ENCODE measurements at regions of chr10 and their contacts with region 1.

Region 1: GRCh38 chr10:61284222-61284890 is 168.8 kb downstream of the TMEM26 start:
- DNase-seq: no peak
- ATAC-seq: peak; percentile 81 to 86
- H3K4me3 ChIP-seq: no peak overlapping the region
- H3K27ac ChIP-seq: peak overlapping the region in 3 of 4 donors; percentile 9 to 25 (median 18)
- H3K4me1 ChIP-seq: peaks cover 7 to 11% of the 10 kb centered on the region in 2 donors
- H3K27me3 ChIP-seq: no peaks in the 10 kb centered on the region
- CTCF ChIP-seq: peak; percentile 65 to 86 (median 76)
- POLR2A ChIP-seq: no peak

Region 2: GRCh38 chr10:60367431-60367830 is 916.9 kb before region 1 on chr10:
- in situ Hi-C with region 1: no loop called
- intact Hi-C with region 1: no loop called
- DNase-seq: no peak
- ATAC-seq: no peak
- H3K4me3 ChIP-seq: no peak overlapping the region
- H3K27ac ChIP-seq: no peak overlapping the region
- H3K4me1 ChIP-seq: peaks cover 0 to 6% of the 10 kb centered on the region in 2 donors
- H3K27me3 ChIP-seq: no peaks in the 10 kb centered on the region
- CTCF ChIP-seq: no peak
- POLR2A ChIP-seq: no peak

Region 3: GRCh38 chr10:60810809-60811182 is 473.6 kb before region 1 on chr10:
- in situ Hi-C with region 1: loop called (anchors 5 to 10 kb)
- intact Hi-C with region 1: no loop called
- DNase-seq: peak; percentile 23 to 29
- ATAC-seq: peak; percentile 98
- H3K4me3 ChIP-seq: no peak overlapping the region
- H3K27ac ChIP-seq: peak overlapping the region; percentile 59 to 86 (median 79)
- H3K4me1 ChIP-seq: peaks cover 13 to 16% of the 10 kb centered on the region in 2 donors
- H3K27me3 ChIP-seq: no peaks in the 10 kb centered on the region
- CTCF ChIP-seq: no peak
- POLR2A ChIP-seq: no peak

Region 4: GRCh38 chr10:60964257-60965235 is 319.8 kb before region 1 on chr10:
- in situ Hi-C with region 1: loop called in 2 of 4 experiments (anchors 10 to 25 kb)
- intact Hi-C with region 1: loop called (anchors 5 kb)
- DNase-seq: peak; percentile 57 to 65
- ATAC-seq: peak; percentile 92
- H3K4me3 ChIP-seq: no peak overlapping the region
- H3K27ac ChIP-seq: peak overlapping the region in 3 of 4 donors; percentile 49 to 60 (median 53)
- H3K4me1 ChIP-seq: peaks cover 6 to 14% of the 10 kb centered on the region in 2 donors
- H3K27me3 ChIP-seq: no peaks in the 10 kb centered on the region
- CTCF ChIP-seq: peak; percentile 78 to 86 (median 80)
- POLR2A ChIP-seq: no peak

Region 5: DNA sequence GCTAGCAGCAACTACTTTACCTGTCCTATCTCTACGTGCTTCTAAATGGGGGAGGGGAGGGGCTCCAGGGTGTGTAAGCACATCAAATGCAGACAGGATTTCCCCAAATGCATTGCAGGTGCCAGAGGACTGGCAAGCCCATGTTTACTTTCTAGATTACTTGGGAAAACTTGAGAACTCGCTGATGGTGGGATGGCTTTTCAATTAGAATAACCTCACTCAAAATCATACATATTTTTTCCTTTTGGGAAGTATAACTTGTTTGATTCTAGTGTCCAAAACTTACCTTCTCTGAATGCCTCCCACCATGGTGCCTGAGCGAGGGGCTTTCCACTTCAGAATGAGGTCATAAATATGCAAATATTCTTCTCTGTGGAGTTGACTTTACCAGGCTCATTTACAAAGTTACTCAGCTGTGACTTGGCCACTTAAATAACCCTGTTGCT is 149.1 kb before region 1 on chr10:
- in situ Hi-C with region 1: loop called in 2 of 4 experiments (anchors 5 to 10 kb)
- intact Hi-C with region 1: loop called (anchors 1 kb)
- DNase-seq: no peak
- ATAC-seq: no peak
- H3K4me3 ChIP-seq: no peak overlapping the region
- H3K27ac ChIP-seq: no peak overlapping the region
- H3K4me1 ChIP-seq: peaks cover 0 to 5% of the 10 kb centered on the region in 2 donors
- H3K27me3 ChIP-seq: no peaks in the 10 kb centered on the region
- CTCF ChIP-seq: no peak
- POLR2A ChIP-seq: no peak

Region 6: GRCh38 chr10:61148451-61148850 is 135.9 kb before region 1 on chr10:
- in situ Hi-C with region 1: loop called in 3 of 4 experiments (anchors 5 kb)
- intact Hi-C with region 1: no loop called
- DNase-seq: no peak
- ATAC-seq: no peak
- H3K4me3 ChIP-seq: no peak overlapping the region
- H3K27ac ChIP-seq: no peak overlapping the region
- H3K4me1 ChIP-seq: no peaks in the 10 kb centered on the region
- H3K27me3 ChIP-seq: no peaks in the 10 kb centered on the region
- CTCF ChIP-seq: no peak
- POLR2A ChIP-seq: no peak

Region 7: GRCh38 chr10:61197057-61197456 is 87.3 kb before region 1 on chr10:
- in situ Hi-C with region 1: no loop called
- intact Hi-C with region 1: loop called (anchors 5 kb)
- DNase-seq: no peak
- ATAC-seq: peak in 1 of 2 donors; percentile 99
- H3K4me3 ChIP-seq: no peak overlapping the region
- H3K27ac ChIP-seq: peak overlapping the region in 3 of 4 donors; percentile 34 to 70 (median 65)
- H3K4me1 ChIP-seq: peaks cover 16% of the 10 kb centered on the region in 2 donors
- H3K27me3 ChIP-seq: no peaks in the 10 kb centered on the region
- CTCF ChIP-seq: no peak
- POLR2A ChIP-seq: no peak

Measured in gastrocnemius medialis (tissue), 4 donors.